T-cell (primary cell): ENCODE measurements at regions of chr1 and their contacts with region 1.

Region 1: DNA sequence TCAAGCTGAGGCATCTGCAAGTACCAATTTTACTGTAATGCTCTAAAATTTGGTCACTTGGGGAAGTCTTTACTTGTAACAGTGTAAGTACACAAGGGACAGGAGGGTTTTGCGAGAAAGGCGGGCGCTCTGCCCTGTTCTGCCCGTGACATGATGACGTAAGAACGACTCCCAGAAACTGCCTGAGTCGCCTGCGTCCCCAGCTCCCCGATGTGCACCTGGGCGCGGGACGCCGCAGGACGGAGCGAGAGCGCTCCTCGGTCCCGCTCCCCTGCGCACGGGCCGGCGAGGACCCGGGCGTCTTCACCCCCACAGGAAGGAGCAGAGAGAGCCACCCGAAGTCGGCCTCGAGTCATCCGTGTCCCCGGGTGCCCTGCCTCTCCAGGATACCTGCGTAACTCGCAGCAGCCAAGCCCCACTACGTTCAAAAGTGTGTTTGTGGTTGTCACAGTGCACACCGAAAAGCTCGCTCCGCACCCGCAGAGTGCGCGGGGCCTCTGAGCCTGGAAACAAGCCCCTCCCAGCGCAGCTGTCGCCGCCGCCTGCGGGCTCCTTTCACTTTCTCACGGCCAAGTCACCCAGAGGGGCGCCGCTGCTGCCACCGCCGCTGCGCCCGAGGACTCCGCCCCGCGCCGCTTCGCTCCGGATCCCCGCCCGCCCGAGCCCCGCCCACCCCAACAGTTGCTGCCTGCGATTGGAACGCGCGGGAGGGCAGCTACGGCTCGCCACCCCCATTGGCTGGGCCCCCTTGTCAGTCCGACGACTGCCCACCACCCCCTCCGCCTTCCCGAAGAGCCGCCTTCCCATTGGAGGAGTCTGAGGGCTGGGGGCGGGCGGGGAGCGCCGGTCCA is 3.2 kb upstream of the ZBTB18 start:
- DNase-seq: peak; percentile 90 to 99 (median 97)
- ATAC-seq: peak; percentile 78 to 85 (median 83)
- H3K4me3 ChIP-seq: peak overlapping the region; percentile 71 to 95
- H3K4me3 Mint-ChIP-seq: peak overlapping the region; percentile 92 to 95 (median 95)
- H3K27ac ChIP-seq: peak overlapping the region; percentile 96
- H3K27ac Mint-ChIP-seq: peak overlapping the region; percentile 99
- H3K4me1 ChIP-seq: peaks cover 17 to 37% of the 10 kb centered on the region in 2 experiments
- H3K4me1 Mint-ChIP-seq: peaks cover 25 to 29% (median 26%) of the 10 kb centered on the region in 3 donors
- H3K27me3 ChIP-seq: no peaks in the 10 kb centered on the region
- H3K27me3 Mint-ChIP-seq: peaks cover 0 to 2% of the 10 kb centered on the region in 2 donors

Region 2: DNA sequence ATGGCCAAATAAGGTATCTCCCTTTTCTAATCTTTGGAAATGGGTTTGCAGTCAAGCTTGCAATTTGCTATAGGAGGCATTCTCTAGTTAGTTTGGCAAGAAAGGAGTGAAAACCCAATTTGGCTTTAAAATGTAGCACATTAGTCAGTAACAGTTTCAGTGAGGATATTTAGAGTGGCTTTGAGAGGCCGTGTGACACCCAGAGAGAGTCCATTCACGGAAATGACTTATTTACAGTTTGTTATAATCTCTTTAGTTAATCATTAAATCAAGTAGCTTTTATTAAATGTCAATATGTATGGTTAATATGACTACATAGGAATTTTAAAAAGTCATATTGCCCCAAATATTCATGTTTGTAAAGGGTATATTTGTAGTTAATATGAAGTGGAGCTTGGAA is 12.8 kb after region 1 on chr1:
- CTCF ChIA-PET with region 1: interaction called, 4 to 10 read pairs
- POLR2A ChIA-PET with region 1: interaction called, 3 to 12 read pairs
- DNase-seq: no peak
- ATAC-seq: no peak
- H3K4me3 ChIP-seq: no peak overlapping the region
- H3K4me3 Mint-ChIP-seq: no peak overlapping the region
- H3K27ac ChIP-seq: no peak overlapping the region
- H3K27ac Mint-ChIP-seq: no peak overlapping the region
- H3K4me1 ChIP-seq: peaks cover 0 to 4% of the 10 kb centered on the region in 2 experiments
- H3K4me1 Mint-ChIP-seq: peaks cover 6 to 19% (median 17%) of the 10 kb centered on the region in 3 donors
- H3K27me3 ChIP-seq: no peaks in the 10 kb centered on the region
- H3K27me3 Mint-ChIP-seq: no peaks in the 10 kb centered on the region

Region 3: DNA sequence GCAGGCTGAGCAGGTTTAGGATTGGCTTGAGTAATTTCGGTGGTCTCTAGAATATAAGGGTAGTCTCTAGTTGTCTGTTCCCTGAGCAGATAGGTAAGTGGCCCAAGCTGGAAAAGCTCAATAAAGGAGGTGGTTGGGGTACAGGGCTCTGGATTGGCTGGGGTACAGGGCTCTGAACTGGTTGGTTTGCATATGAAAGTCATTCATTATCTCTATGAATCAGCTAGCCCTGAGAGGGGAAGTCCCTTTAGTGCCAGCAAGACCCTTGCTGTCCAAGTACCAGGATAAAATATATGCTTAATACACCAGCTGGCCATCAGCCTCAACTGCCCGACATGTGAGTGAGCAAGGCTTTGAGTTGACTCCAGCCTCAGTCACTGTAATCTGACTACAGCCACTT is 96.2 kb after region 1 on chr1:
- CTCF ChIA-PET with region 1: no interaction called
- POLR2A ChIA-PET with region 1: no interaction called
- DNase-seq: no peak
- ATAC-seq: no peak
- H3K4me3 ChIP-seq: no peak overlapping the region
- H3K4me3 Mint-ChIP-seq: no peak overlapping the region
- H3K27ac ChIP-seq: no peak overlapping the region
- H3K27ac Mint-ChIP-seq: no peak overlapping the region
- H3K4me1 ChIP-seq: no peaks in the 10 kb centered on the region
- H3K4me1 Mint-ChIP-seq: no peaks in the 10 kb centered on the region
- H3K27me3 ChIP-seq: peaks cover 0 to 5% of the 10 kb centered on the region in 2 experiments
- H3K27me3 Mint-ChIP-seq: peaks cover 11 to 13% of the 10 kb centered on the region in 2 donors